ENCODE measurements at regions of chr7 and their contacts with region 1.

Region 1: GRCh38 chr7:38070718-38071117 is 107.3 kb upstream of the STARD3NL start:
- H3K4me3 Mint-ChIP-seq: no peak overlapping the region
- H3K27ac Mint-ChIP-seq: no peak overlapping the region
- H3K4me1 Mint-ChIP-seq: peaks cover 5% of the 10 kb centered on the region
- H3K27me3 Mint-ChIP-seq: no peaks in the 10 kb centered on the region

Region 2: DNA sequence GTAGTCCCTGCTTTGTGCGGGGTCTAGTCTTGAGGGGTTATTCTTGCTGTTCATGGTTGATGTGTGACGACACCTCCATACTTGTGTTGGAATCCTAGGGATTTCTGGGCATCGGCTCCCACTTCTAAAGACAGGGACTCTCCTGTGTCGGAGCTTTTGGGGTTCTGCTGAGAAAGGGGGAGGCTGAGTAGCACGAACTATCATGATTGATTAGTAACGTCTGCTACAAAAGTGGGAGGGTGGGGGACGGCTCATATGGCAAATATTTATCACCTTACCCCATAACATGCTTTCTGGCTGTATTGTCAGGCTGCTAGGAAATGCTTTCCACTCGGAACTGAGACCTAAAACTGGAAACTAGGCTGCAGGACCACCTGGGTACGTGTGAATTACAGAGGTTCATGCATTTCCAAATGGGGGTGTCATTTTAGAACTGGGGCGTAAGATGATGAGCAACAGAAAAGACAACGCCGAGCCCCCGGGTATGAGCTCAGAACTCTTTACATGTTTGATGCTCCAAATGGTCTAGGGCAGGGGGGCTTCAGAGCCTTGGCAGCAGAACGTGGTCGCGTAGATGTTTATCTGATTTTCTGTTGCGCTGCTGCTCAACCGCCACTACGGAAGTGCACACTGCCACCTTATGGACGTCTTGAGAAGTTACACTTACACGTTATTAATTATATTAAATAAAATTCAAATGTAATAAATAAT is 237.5 kb before region 1 on chr7:
- intact Hi-C with region 1: no loop called
- H3K4me3 Mint-ChIP-seq: peak overlapping the region; percentile 79
- H3K27ac Mint-ChIP-seq: peak overlapping the region; percentile 61
- H3K4me1 Mint-ChIP-seq: peaks cover 21% of the 10 kb centered on the region
- H3K27me3 Mint-ChIP-seq: no peaks in the 10 kb centered on the region

Region 3: DNA sequence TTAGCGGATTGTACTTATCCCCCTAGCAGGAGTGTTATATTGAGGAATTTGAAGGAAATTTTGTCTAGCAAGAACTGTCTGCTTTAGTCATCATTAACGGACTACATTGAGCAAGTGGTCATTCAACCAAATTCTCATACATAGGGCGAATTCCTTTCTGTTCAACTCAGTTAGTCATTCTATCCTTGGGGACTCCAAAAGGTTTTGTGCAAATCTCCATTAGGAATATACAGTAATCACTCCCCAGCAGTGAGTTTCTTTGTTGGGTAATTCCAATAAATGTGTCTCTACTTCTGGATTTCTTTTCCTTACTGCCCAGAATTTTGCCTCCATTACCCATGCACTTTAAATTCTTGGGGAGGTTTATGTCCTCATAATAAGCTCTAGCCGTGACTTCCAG is 99.2 kb before region 1 on chr7:
- intact Hi-C with region 1: no loop called
- H3K4me3 Mint-ChIP-seq: no peak overlapping the region
- H3K27ac Mint-ChIP-seq: no peak overlapping the region
- H3K4me1 Mint-ChIP-seq: no peaks in the 10 kb centered on the region
- H3K27me3 Mint-ChIP-seq: no peaks in the 10 kb centered on the region

Region 4: GRCh38 chr7:38138171-38138570 is 67.5 kb after region 1 on chr7:
- intact Hi-C with region 1: loop called (anchors 10 kb)
- H3K4me3 Mint-ChIP-seq: no peak overlapping the region
- H3K27ac Mint-ChIP-seq: no peak overlapping the region
- H3K4me1 Mint-ChIP-seq: peaks cover 6% of the 10 kb centered on the region
- H3K27me3 Mint-ChIP-seq: no peaks in the 10 kb centered on the region

Region 5: GRCh38 chr7:38600746-38601145 is 530.0 kb after region 1 on chr7:
- intact Hi-C with region 1: no loop called
- H3K4me3 Mint-ChIP-seq: no peak overlapping the region
- H3K27ac Mint-ChIP-seq: no peak overlapping the region
- H3K4me1 Mint-ChIP-seq: no peaks in the 10 kb centered on the region
- H3K27me3 Mint-ChIP-seq: no peaks in the 10 kb centered on the region

Measured in dendritic cell treated with granulocyte-macrophage colony-stimulating factor and Interleukin-4, amounts not matched to agents 40 ng/mL and 50 ng/mL, for 4 days (primary cell).